Gastrocnemius medialis (tissue), 4 donors: ENCODE measurements at regions of chr7 and their contacts with region 1.

Region 1: GRCh38 chr7:66844552-66845378 is 76.3 kb upstream of the TMEM248 start:
- DNase-seq: peak; percentile 95 to 98
- ATAC-seq: peak; percentile 95 to 98
- H3K4me3 ChIP-seq: peak overlapping the region; percentile 68 to 98 (median 86)
- H3K27ac ChIP-seq: peak overlapping the region; percentile 91 to 99 (median 97)
- H3K4me1 ChIP-seq: peaks cover 9 to 22% of the 10 kb centered on the region in 2 donors
- H3K27me3 ChIP-seq: no peaks in the 10 kb centered on the region
- CTCF ChIP-seq: peak; percentile 31 to 49 (median 38)
- POLR2A ChIP-seq: peak; percentile 87 to 91

Region 2: GRCh38 chr7:66740302-66740979 is 104.3 kb before region 1 on chr7 and contains the start of gene RABGEF1:
- in situ Hi-C with region 1: no loop called
- intact Hi-C with region 1: loop called (anchors 2 kb)
- DNase-seq: peak; percentile 95 to 96
- ATAC-seq: peak; percentile 91 to 92
- H3K4me3 ChIP-seq: peak within 1 kb of the TSS; percentile 82 to 100 (median 98)
- H3K27ac ChIP-seq: peak within 1 kb of the TSS; percentile 97 to 99 (median 98)
- H3K4me1 ChIP-seq: peaks cover 15 to 16% of the 10 kb centered on the region in 2 donors
- H3K27me3 ChIP-seq: no peaks in the 10 kb centered on the region
- CTCF ChIP-seq: peak in 1 of 5 experiments; percentile 16
- POLR2A ChIP-seq: peak; percentile 91 to 96
- total RNA-seq, gene RABGEF1: 18.8 to 29.7 (median 24.9) TPM

Region 3: DNA sequence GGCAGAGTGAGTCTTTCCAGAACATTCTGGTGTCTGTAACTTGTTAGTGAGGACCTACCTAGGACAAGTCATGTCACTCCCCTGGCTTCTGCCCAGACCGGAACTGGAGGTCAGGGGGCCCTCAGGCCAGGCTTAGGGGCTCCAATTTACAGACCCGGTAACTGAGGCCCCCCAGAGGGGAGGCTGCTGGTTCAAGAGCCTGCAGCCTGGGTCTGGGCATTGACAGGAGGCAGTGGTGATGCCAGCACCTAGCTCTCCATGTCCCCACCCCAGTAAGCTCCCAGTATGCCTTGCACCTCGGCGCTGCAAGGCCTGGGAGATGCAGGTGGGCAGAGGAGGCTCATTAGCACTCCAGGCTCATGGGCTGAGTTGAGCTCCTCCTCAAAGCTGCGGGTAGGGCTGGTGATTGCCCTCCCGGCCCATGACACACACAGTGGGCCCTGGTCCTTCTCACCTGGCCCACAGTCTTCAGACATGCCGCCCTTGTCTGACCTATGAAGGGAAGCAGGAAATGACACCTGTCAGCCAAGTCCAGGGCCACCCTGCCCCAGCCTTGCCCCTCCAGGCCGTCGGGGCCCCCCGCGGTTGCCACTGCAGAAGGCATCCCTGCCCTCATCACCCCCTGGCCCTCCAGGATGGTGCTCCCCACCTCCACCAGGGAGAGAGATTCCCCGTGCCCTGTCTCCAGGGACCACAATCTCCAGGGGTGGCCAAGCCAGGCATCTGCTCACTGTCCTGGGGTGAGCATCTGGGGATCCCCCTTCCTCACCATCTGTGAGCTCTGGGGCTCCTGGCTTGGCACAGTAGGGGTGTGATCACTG is 12.0 kb before region 1 on chr7:
- in situ Hi-C with region 1: no loop called
- intact Hi-C with region 1: no loop called
- DNase-seq: no peak
- ATAC-seq: no peak
- H3K4me3 ChIP-seq: no peak overlapping the region
- H3K27ac ChIP-seq: no peak overlapping the region
- H3K4me1 ChIP-seq: no peaks in the 10 kb centered on the region
- H3K27me3 ChIP-seq: no peaks in the 10 kb centered on the region
- CTCF ChIP-seq: no peak
- POLR2A ChIP-seq: no peak

Region 4: DNA sequence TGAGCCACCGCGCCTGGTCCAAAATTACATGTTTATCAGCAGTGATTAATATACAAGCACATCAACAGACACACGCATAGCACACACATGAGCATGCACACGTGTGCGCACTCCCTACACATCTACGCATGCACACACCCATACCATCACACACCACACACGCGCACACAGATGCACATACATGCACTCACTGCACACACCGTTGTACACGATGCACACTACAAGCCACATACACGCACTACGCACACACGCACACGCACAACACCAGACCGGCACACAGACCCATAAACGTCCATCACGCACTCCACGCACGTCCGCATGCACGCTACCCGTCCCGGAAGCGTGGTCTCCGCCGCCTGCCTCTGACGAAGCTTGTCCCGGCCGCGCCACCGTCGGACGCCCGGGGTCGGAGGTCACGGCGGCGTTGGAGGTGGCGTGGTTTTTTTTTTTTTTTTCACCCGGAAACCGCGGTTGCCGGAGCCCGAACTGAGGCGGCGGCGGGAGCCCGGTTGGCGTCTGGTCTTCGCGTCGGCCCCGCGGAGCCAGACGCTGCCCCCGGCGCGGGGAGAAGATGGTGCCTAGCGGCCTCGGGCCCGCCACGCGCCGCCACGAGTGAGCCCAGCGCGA is 76.1 kb after region 1 on chr7 and contains the start of gene TMEM248:
- in situ Hi-C with region 1: loop called in 1 of 4 experiments (anchors 10 kb)
- intact Hi-C with region 1: loop called (anchors 5 kb)
- DNase-seq: peak; percentile 68 to 85
- ATAC-seq: peak; percentile 85 to 90
- H3K4me3 ChIP-seq: peak within 1 kb of the TSS; percentile 80 to 93 (median 91)
- H3K27ac ChIP-seq: peak within 1 kb of the TSS; percentile 77 to 90 (median 84)
- H3K4me1 ChIP-seq: peaks cover 41 to 49% of the 10 kb centered on the region in 2 donors
- H3K27me3 ChIP-seq: no peaks in the 10 kb centered on the region
- CTCF ChIP-seq: peak in 1 of 5 experiments; percentile 12
- POLR2A ChIP-seq: peak; percentile 25 to 57
- total RNA-seq, gene TMEM248: 53.2 to 65.9 (median 60.3) TPM